Activated T-helper 1 cell treated with anti-CD3 and anti-CD28 coated beads, Interleukin-12 subunit alpha, Interleukin-12 subunit beta, Interleukin-2, Interleukin-4 antibody, amounts not matched to agents 30 ng/mL and 10 ng/mL and 1 ng/mL, durations not matched to agents 14 hours and 24 hours and 36 hours (primary cell): ENCODE measurements at regions of chr18 and their contacts with region 1.

Region 1: GRCh38 chr18:69935319-69936190 is 12.1 kb downstream of the CD226 start:
- DNase-seq: peak; percentile 80
- H3K4me3 Mint-ChIP-seq: no peak overlapping the region
- H3K27ac Mint-ChIP-seq: no peak overlapping the region
- H3K4me1 Mint-ChIP-seq: peaks cover 28% of the 10 kb centered on the region
- H3K27me3 Mint-ChIP-seq: peaks cover 2% of the 10 kb centered on the region

Region 2: GRCh38 chr18:68714609-68715496 is 1220.7 kb before region 1 on chr18 and contains the start of gene TMX3:
- intact Hi-C with region 1: loop called (anchors 10 kb)
- DNase-seq: peak; percentile 90
- H3K4me3 Mint-ChIP-seq: peak within 1 kb of the TSS; percentile 92
- H3K27ac Mint-ChIP-seq: peak within 1 kb of the TSS; percentile 87
- H3K4me1 Mint-ChIP-seq: peaks cover 51% of the 10 kb centered on the region
- H3K27me3 Mint-ChIP-seq: no peaks in the 10 kb centered on the region
- total RNA-seq, gene TMX3: 63.7 and 65.0 TPM in 2 replicates

Region 3: DNA sequence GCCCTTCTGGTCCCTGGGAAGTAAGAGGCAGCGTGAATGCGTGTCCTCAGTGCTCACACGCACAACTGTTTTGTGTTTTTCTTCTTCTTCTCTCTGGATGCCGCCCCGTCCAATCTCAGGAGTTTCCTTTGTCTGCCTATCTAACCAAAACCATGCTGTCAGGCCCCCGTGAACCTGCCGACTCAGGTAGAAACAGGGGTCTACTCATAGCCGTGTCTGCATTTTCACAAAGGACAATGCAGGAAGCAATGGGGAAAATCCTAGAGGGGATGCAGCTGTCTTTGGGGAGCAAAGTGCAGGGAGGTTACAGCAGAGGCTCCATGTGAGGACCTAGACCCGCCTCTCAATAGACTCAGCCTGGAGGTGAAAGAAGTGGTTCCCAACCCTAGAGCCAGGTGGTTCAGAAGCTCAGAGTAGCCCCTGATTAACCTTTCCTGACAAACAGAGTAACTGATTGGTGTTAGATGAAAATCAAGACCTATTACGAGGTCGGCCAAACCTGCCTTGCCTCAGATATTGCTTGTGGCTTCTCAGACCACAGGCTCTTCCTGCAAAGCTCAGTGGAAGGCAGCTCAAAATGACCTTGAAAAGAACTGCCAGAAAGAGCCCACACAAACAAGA is 37.2 kb before region 1 on chr18:
- intact Hi-C with region 1: loop called (anchors 1 kb)
- DNase-seq: no peak
- H3K4me3 Mint-ChIP-seq: peak overlapping the region; percentile 78
- H3K27ac Mint-ChIP-seq: peak overlapping the region; percentile 97
- H3K4me1 Mint-ChIP-seq: peaks cover 78% of the 10 kb centered on the region
- H3K27me3 Mint-ChIP-seq: no peaks in the 10 kb centered on the region

Region 4: GRCh38 chr18:69948919-69949537 is 13.5 kb after region 1 on chr18:
- intact Hi-C with region 1: loop called (anchors 1 kb)
- DNase-seq: peak; percentile 40
- H3K4me3 Mint-ChIP-seq: no peak overlapping the region
- H3K27ac Mint-ChIP-seq: no peak overlapping the region
- H3K4me1 Mint-ChIP-seq: peaks cover 35% of the 10 kb centered on the region
- H3K27me3 Mint-ChIP-seq: no peaks in the 10 kb centered on the region

Region 5: DNA sequence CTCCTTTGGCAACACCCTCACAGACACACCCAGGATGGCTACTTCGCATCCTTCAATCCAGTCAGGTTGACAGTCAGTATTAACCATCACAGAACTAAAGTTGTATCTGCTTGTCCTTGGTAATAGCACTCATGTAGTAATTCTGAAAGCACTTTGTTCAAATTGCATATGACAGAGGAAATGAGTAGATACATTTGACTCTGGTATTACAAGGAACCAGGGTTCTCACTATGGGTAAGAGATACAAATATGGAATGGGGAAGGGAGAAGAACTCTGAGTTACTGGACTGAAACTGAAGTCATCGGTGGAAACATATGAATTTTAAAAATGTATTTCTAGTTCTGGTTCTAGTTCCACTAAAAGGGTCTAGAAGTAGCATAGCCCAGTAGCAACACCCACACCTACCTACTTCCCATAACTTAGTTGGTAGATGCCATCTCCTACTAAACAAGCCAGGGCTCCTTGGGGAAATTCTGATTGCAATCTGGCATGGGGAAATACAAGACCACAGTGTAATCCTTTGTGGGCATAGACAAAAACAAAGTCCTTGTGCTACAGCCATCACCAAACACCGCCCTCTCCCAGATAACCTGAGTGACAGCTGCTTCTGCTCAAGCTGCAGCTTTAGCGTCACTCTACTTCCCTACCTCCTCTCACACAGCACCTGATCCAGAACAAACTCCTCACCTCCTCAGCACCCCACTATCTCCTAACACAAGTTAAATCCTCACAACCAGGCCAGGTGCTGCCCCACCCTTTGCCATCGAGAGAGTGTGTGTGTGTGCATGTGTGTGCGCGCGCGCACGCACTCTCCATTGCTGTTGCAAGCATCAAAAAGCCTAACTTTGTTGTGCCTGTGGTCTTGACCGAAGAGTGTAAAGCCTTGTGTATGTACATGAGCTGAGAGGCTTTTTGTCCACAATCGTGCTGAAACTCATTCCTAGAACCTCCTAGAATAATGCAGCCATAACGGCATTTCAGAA is 43.5 kb after region 1 on chr18:
- intact Hi-C with region 1: loop called (anchors 1 kb)
- DNase-seq: no peak
- H3K4me3 Mint-ChIP-seq: peak overlapping the region; percentile 40
- H3K27ac Mint-ChIP-seq: peak overlapping the region; percentile 74
- H3K4me1 Mint-ChIP-seq: peaks cover 50% of the 10 kb centered on the region
- H3K27me3 Mint-ChIP-seq: no peaks in the 10 kb centered on the region